Body of pancreas (tissue), 4 donors: ENCODE measurements at regions of chr1 and their contacts with region 1.

Region 1: GRCh38 chr1:209993061-209993830 is 55.2 kb downstream of the SYT14 start:
- DNase-seq: no peak
- ATAC-seq: no peak
- H3K4me3 ChIP-seq: no peak overlapping the region
- H3K27ac ChIP-seq: no peak overlapping the region
- H3K4me1 ChIP-seq: no peaks in the 10 kb centered on the region
- H3K27me3 ChIP-seq: no peaks in the 10 kb centered on the region
- CTCF ChIP-seq: no peak
- POLR2A ChIP-seq: no peak

Region 2: GRCh38 chr1:209855623-209856022 is 137.6 kb before region 1 on chr1:
- intact Hi-C with region 1: loop called (anchors 5 kb)
- DNase-seq: no peak
- ATAC-seq: no peak
- H3K4me3 ChIP-seq: no peak overlapping the region
- H3K27ac ChIP-seq: no peak overlapping the region
- H3K4me1 ChIP-seq: no peaks in the 10 kb centered on the region
- H3K27me3 ChIP-seq: no peaks in the 10 kb centered on the region
- CTCF ChIP-seq: no peak
- POLR2A ChIP-seq: no peak

Region 3: DNA sequence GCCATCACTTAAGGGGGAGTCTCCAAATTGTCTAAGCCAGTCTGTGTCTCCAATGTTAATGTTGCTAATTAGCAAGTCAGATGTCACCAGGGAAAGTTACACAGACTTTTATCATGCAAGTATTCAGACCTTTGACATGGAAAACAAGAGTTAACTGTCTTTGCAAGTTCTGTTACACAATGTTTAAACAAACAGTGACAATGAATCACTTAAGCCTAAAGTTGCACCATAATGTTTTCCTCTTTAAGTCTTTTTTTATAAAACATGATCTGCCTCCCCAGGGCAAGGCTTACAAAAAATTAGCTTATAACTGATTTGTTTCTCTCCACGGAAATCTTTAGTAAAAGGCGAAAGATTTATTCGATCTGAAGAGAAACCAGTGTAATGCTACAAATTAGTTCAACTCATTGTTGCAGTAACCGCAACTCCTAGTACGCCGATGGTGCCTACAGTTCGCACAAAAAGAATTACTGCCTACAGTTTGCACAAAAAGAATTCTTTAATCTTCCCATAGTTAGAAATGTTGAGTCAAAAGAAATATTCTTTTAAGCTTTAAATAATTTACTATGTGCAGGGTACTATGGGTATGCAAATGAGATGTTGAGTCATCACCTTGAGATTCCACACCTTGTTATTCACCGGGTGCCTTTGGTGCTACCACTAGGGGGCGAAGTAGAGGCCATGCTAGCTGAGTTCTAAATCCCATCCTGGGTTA is 380.8 kb after region 1 on chr1:
- intact Hi-C with region 1: no loop called
- DNase-seq: peak; percentile 53 to 59 (median 58)
- ATAC-seq: peak; percentile 82
- H3K4me3 ChIP-seq: no peak overlapping the region
- H3K27ac ChIP-seq: peak overlapping the region in 3 of 4 donors; percentile 7 to 78 (median 38)
- H3K4me1 ChIP-seq: peaks cover 5% of the 10 kb centered on the region
- H3K27me3 ChIP-seq: no peaks in the 10 kb centered on the region
- CTCF ChIP-seq: peak in 6 of 7 experiments; percentile 33 to 61 (median 56)
- POLR2A ChIP-seq: peak in 2 of 3 donors; percentile 60 to 73